GM12878 (cell line): ENCODE measurements at regions of chr5 and their contacts with region 1.

Region 1: GRCh38 chr5:170278611-170279452 is 18.7 kb downstream of the LCP2 start:
- DNase-seq: peak; percentile 78
- ATAC-seq: peak; percentile 86
- H3K4me3 ChIP-seq: peak overlapping the region; percentile 2; the same call in 1 of the 2 replicates
- H3K27ac ChIP-seq: peak overlapping the region; percentile 91
- H3K4me1 ChIP-seq: peaks cover 36% of the 10 kb centered on the region
- H3K27me3 ChIP-seq: no peaks in the 10 kb centered on the region
- CTCF ChIP-seq: no peak
- EP300 ChIP-seq: 0 out of 4 replicates have a peak, but pooled peaks of 1 of the 2 experiments have one; percentile 13
- POLR2A ChIP-seq: peak; percentile 56; the same call in 1 of the 2 replicates
- RAD21 ChIP-seq: peak; percentile 27; the same call in 1 of the 2 replicates

Region 2: GRCh38 chr5:170151097-170151831 is 127.6 kb before region 1 on chr5:
- CTCF ChIA-PET with region 1: no interaction called
- POLR2A ChIA-PET with region 1: no interaction called
- RAD21 ChIA-PET with region 1: no interaction called
- SMC1A ChIA-PET with region 1: no interaction called
- in situ Hi-C with region 1: no loop called
- intact Hi-C with region 1: no loop called
- DNase-seq: no peak
- ATAC-seq: peak; percentile 93
- H3K4me3 ChIP-seq: no peak overlapping the region
- H3K27ac ChIP-seq: no peak overlapping the region
- H3K4me1 ChIP-seq: peaks cover 9% of the 10 kb centered on the region
- H3K27me3 ChIP-seq: no peaks in the 10 kb centered on the region
- CTCF ChIP-seq: no peak
- EP300 ChIP-seq: no peak
- POLR2A ChIP-seq: no peak
- RAD21 ChIP-seq: no peak

Region 3: DNA sequence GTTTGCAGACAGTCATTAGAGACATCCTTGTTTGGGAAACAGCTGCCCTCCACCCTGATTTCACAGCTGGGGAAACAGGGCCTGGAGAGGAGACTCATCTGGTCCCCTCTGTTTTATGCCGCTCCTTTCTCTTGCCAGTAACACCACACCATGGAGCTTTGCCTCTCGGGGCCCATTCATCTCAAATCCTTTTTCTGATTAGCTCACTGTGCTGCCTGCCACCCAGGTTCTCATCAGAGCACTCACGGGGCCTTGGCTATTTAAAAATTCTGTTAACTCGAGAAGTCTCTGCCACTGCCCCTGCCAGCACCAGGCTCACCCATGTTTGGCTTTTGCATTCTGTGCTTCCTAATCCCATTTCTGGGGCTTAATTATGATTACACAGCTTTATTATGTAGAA is 82.9 kb before region 1 on chr5:
- CTCF ChIA-PET with region 1: no interaction called
- POLR2A ChIA-PET with region 1: no interaction called
- RAD21 ChIA-PET with region 1: no interaction called
- SMC1A ChIA-PET with region 1: no interaction called
- in situ Hi-C with region 1: no loop called
- intact Hi-C with region 1: no loop called
- DNase-seq: no peak
- ATAC-seq: no peak
- H3K4me3 ChIP-seq: no peak overlapping the region
- H3K27ac ChIP-seq: no peak overlapping the region
- H3K4me1 ChIP-seq: no peaks in the 10 kb centered on the region
- H3K27me3 ChIP-seq: peaks cover 1 to 2% of the 10 kb centered on the region in 2 experiments; a peak in 2 of 4 replicates
- CTCF ChIP-seq: no peak
- EP300 ChIP-seq: no peak
- POLR2A ChIP-seq: no peak
- RAD21 ChIP-seq: no peak

Region 4: GRCh38 chr5:170293273-170293672 is 14.4 kb after region 1 on chr5:
- CTCF ChIA-PET with region 1: interaction called, 34 read pairs
- POLR2A ChIA-PET with region 1: interaction called, 75 read pairs
- RAD21 ChIA-PET with region 1: interaction called, 182 read pairs
- SMC1A ChIA-PET with region 1: interaction called, 451 read pairs
- in situ Hi-C with region 1: no loop called
- intact Hi-C with region 1: loop called (anchors 1 kb)
- DNase-seq: peak; percentile 87
- ATAC-seq: peak; percentile 86
- H3K4me3 ChIP-seq: peak overlapping the region; percentile 77
- H3K27ac ChIP-seq: no peak overlapping the region
- H3K4me1 ChIP-seq: peaks cover 15% of the 10 kb centered on the region
- H3K27me3 ChIP-seq: no peaks in the 10 kb centered on the region
- CTCF ChIP-seq: peak in 1 of 3 experiments; percentile 19; a peak in 1 of 6 replicates
- EP300 ChIP-seq: peak in 1 of 2 experiments; percentile 80; a peak in 2 of 4 replicates
- POLR2A ChIP-seq: no peak
- RAD21 ChIP-seq: peak; percentile 34; the same call in 1 of the 2 replicates

Region 5: DNA sequence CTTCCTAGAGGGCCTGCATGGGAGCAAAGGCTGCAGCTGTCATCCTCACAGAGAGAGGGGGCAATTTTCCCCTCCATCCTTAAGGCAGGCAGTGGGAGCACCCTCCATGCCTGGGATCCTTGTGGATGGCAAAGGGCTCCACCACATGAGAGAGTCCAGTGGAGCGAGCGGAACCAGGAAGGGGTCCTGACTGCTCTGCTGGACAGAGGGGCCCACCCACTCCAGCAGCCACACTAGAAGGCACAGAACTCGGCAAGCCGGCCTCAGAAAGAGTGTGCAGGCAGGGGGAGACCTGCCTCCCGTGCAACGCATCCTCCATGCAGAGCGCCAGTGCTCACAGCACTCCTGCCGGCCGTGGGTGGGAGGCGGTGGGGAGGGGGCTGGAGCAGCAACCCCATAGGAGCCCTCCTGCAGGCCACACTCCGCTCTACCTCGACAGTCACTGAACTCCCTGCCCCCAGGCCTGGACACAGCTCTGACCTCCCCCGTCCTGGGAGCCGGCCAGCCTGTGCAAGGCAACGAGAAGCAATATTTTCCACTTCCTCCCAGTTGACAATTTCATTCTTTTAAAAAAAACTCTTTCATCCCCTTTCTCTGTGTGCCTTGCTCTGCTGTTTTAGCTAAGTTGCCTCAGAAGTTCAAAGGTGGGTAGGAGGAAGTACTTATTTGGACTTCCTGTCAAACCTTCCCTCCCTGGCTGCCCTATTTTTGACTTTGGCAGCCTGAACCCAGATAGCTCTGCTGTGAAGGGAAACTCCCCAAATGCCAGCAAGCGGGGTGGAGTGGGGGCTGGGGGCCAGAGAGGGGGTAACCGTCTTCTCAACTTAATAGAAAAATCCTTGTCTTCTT is 24.0 kb after region 1 on chr5:
- CTCF ChIA-PET with region 1: interaction called, 13 read pairs
- POLR2A ChIA-PET with region 1: interaction called, 75 read pairs
- RAD21 ChIA-PET with region 1: interaction called, 182 read pairs
- SMC1A ChIA-PET with region 1: interaction called, 451 read pairs
- in situ Hi-C with region 1: no loop called
- intact Hi-C with region 1: no loop called
- DNase-seq: peak; percentile 68
- ATAC-seq: peak; percentile 89
- H3K4me3 ChIP-seq: no peak overlapping the region
- H3K27ac ChIP-seq: peak overlapping the region; percentile 24; the same call in 1 of the 2 replicates
- H3K4me1 ChIP-seq: peaks cover 34% of the 10 kb centered on the region
- H3K27me3 ChIP-seq: no peaks in the 10 kb centered on the region
- CTCF ChIP-seq: no peak
- EP300 ChIP-seq: no peak
- POLR2A ChIP-seq: no peak
- RAD21 ChIP-seq: no peak

Region 6: DNA sequence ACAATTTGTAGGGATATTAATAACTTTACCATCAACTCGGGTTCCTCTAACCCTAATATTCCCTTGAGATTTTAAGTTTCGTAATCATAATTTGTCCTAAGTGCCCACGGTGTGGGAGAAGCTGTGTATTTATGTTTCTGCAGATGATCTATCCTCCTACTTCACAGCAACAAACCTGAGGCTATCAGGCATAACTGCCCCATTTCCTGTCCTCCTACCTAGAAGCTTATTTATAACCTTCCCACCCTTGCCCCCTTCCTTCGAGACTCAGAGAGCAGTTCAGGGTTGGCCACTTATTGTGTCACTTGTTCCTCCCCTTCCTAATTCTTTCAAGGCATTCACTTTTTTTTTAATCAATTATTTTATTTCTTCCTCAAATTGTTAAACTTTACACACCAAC is 48.3 kb after region 1 on chr5:
- CTCF ChIA-PET with region 1: interaction called, 14 read pairs
- POLR2A ChIA-PET with region 1: interaction called, 11 read pairs
- RAD21 ChIA-PET with region 1: interaction called, 58 read pairs
- SMC1A ChIA-PET with region 1: interaction called, 125 read pairs
- in situ Hi-C with region 1: no loop called
- intact Hi-C with region 1: loop called (anchors 1 kb)
- DNase-seq: no peak
- ATAC-seq: peak; percentile 50
- H3K4me3 ChIP-seq: peak overlapping the region; percentile 33; the same call in 1 of the 2 replicates
- H3K27ac ChIP-seq: peak overlapping the region; percentile 1; the same call in 1 of the 2 replicates
- H3K4me1 ChIP-seq: peaks cover 36% of the 10 kb centered on the region
- H3K27me3 ChIP-seq: no peaks in the 10 kb centered on the region
- CTCF ChIP-seq: no peak
- EP300 ChIP-seq: no peak
- POLR2A ChIP-seq: no peak
- RAD21 ChIP-seq: no peak

Region 7: DNA sequence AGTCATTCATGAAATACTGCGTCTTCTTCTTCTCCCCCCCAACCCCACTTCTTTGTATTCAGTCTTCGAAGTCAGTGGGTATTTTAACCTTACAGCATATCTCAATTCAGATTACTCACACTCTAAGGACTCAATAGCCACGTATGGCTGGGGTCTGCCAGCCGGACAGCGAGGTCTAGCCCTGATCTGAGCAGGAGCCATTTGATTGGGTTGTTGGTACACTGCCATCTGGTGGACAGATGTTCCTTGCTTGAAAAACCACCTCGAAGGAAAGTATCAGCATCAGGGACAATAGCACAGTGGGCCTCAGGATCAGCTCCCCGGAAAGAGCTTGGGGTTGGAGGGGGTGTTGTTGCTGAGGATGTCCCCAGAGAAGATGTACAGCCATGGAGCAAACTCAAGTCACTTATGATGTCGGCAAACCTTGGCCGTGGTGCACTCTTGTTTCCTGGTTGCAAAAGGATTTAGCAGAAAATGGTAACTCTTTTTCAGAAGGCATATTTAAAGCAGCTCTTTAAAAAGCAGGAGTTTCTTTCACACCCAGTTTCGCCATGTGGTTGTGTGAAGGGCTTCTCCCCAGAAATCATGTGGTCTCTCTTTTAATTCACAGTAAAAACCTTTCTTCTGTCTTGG is 142.1 kb after region 1 on chr5:
- CTCF ChIA-PET with region 1: interaction called, 28 read pairs
- POLR2A ChIA-PET with region 1: no interaction called
- RAD21 ChIA-PET with region 1: interaction called, 4 read pairs
- SMC1A ChIA-PET with region 1: interaction called, 4 read pairs
- in situ Hi-C with region 1: no loop called
- intact Hi-C with region 1: no loop called
- DNase-seq: no peak
- ATAC-seq: peak; percentile 92
- H3K4me3 ChIP-seq: no peak overlapping the region
- H3K27ac ChIP-seq: no peak overlapping the region
- H3K4me1 ChIP-seq: no peaks in the 10 kb centered on the region
- H3K27me3 ChIP-seq: no peaks in the 10 kb centered on the region; a peak in 1 of 4 replicates
- CTCF ChIP-seq: peak; percentile 65 to 73 (median 68)
- EP300 ChIP-seq: no peak
- POLR2A ChIP-seq: no peak
- RAD21 ChIP-seq: peak; percentile 76

Region 8: GRCh38 chr5:170429014-170429413 is 150.2 kb after region 1 on chr5:
- CTCF ChIA-PET with region 1: interaction called, 10 read pairs
- POLR2A ChIA-PET with region 1: no interaction called
- RAD21 ChIA-PET with region 1: no interaction called
- SMC1A ChIA-PET with region 1: interaction called, 3 read pairs
- in situ Hi-C with region 1: no loop called
- intact Hi-C with region 1: no loop called
- DNase-seq: no peak
- ATAC-seq: no peak
- H3K4me3 ChIP-seq: no peak overlapping the region
- H3K27ac ChIP-seq: no peak overlapping the region
- H3K4me1 ChIP-seq: no peaks in the 10 kb centered on the region
- H3K27me3 ChIP-seq: peaks cover 0 to 2% of the 10 kb centered on the region in 2 experiments; a peak in 2 of 4 replicates
- CTCF ChIP-seq: no peak
- EP300 ChIP-seq: no peak
- POLR2A ChIP-seq: no peak
- RAD21 ChIP-seq: no peak